HEK293 (cell line): ENCODE measurements at regions of chr11 and their contacts with region 1.

Region 1: DNA sequence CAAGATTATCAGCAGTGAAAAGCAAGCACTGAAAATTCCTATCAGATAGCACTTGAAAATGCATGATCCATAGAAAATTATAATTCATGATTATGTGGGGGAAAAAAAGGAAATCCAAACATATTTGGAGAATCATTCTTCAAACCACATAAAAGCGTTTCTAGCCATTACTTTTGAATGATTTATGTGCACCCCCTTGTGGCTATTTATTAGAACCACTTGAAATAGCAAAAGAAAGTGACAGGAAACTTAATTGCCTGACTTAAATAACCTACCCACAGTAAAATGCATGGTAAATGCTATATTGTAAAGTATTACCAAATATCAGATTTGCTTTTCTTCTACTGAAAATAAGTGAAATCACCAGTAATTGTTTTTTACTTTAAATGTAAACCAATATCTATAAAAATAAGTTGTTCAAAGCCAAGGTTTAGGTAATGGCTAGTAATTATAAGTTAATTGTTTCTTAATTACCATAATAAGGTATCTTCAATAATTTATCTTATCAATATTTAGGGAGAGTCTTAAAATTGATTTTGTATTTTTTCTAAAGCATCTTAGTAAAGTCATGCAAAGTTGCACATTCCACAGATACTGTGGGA is 168.5 kb downstream of the ARHGAP42 start:
- H3K4me3 ChIP-seq: no peak overlapping the region
- H3K27ac ChIP-seq: no peak overlapping the region
- H3K4me1 ChIP-seq: no peaks in the 10 kb centered on the region
- CTCF ChIP-seq: peak; percentile 22; the same call in 1 of the 2 replicates

Region 2: GRCh38 chr11:100681064-100681502 is 174.5 kb before region 1 on chr11:
- CTCF ChIA-PET with region 1: interaction called, 15 read pairs
- POLR2A ChIA-PET with region 1: interaction called, 7 read pairs
- H3K4me3 ChIP-seq: no peak overlapping the region
- H3K27ac ChIP-seq: no peak overlapping the region
- H3K4me1 ChIP-seq: no peaks in the 10 kb centered on the region
- CTCF ChIP-seq: no peak